H1 (cell line): ENCODE measurements at regions of chr9 and their contacts with region 1.

Region 1: GRCh38 chr9:99040911-99041582 is 63.9 kb upstream of the TGFBR1 start:
- DNase-seq: no peak
- H3K4me3 ChIP-seq: no peak overlapping the region
- H3K27ac ChIP-seq: no peak overlapping the region
- H3K4me1 ChIP-seq: no peaks in the 10 kb centered on the region
- H3K27me3 ChIP-seq: no peaks in the 10 kb centered on the region
- CTCF ChIP-seq: no peak
- EP300 ChIP-seq: no peak
- POLR2A ChIP-seq: no peak
- RAD21 ChIP-seq: no peak

Region 2: GRCh38 chr9:98755006-98755575 is 286.0 kb before region 1 on chr9:
- CTCF ChIA-PET with region 1: no interaction called
- POLR2A ChIA-PET with region 1: no interaction called
- DNase-seq: no peak
- H3K4me3 ChIP-seq: no peak overlapping the region
- H3K27ac ChIP-seq: no peak overlapping the region
- H3K4me1 ChIP-seq: no peaks in the 10 kb centered on the region
- H3K27me3 ChIP-seq: no peaks in the 10 kb centered on the region
- CTCF ChIP-seq: peak in 2 of 3 experiments; percentile 12 to 39; a peak in 2 of 4 replicates
- EP300 ChIP-seq: no peak
- POLR2A ChIP-seq: no peak
- RAD21 ChIP-seq: no peak

Region 3: GRCh38 chr9:99026338-99027298 is 14.4 kb before region 1 on chr9:
- CTCF ChIA-PET with region 1: interaction called, 13 read pairs
- POLR2A ChIA-PET with region 1: no interaction called
- DNase-seq: no peak
- H3K4me3 ChIP-seq: no peak overlapping the region
- H3K27ac ChIP-seq: no peak overlapping the region
- H3K4me1 ChIP-seq: no peaks in the 10 kb centered on the region
- H3K27me3 ChIP-seq: no peaks in the 10 kb centered on the region
- CTCF ChIP-seq: peak in 2 of 3 experiments; percentile 3 to 5; a peak in 1 of 4 replicates
- EP300 ChIP-seq: no peak
- POLR2A ChIP-seq: no peak
- RAD21 ChIP-seq: no peak

Region 4: GRCh38 chr9:99433555-99433954 is 392.5 kb after region 1 on chr9:
- CTCF ChIA-PET with region 1: no interaction called
- POLR2A ChIA-PET with region 1: no interaction called
- DNase-seq: peak in 1 of 2 experiments; percentile 13
- H3K4me3 ChIP-seq: no peak overlapping the region
- H3K27ac ChIP-seq: no peak overlapping the region
- H3K4me1 ChIP-seq: peaks cover 0 to 3% (median 1%) of the 10 kb centered on the region in 4 experiments; a peak in 1 of 7 replicates
- H3K27me3 ChIP-seq: no peaks in the 10 kb centered on the region
- CTCF ChIP-seq: no peak
- EP300 ChIP-seq: no peak
- POLR2A ChIP-seq: no peak
- RAD21 ChIP-seq: no peak